CD14-positive monocyte (primary cell): ENCODE measurements at regions of chr9 and their contacts with region 1.

Region 1: DNA sequence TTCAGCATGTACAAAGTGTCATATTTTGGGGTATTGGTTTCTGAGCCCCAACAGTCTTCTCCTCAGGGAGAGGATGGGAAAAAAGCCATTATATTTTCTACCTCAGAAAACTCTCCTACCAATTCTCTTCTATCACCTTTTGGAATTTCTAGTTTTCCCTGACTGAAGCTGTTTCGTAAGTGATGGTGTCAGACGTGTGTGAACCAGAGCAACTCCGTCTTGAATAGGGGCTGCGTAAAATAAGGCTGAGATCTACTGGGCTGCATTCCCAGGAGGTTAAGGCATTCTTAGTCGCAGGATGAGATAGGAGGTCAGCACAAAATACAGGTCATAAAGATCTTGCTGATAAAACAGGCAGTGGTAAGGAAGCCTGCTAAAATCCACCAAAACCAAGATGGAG is 197.3 kb upstream of the C9orf72 start:
- DNase-seq: no peak
- H3K4me3 ChIP-seq: no peak overlapping the region
- H3K4me3 Mint-ChIP-seq: no peak overlapping the region
- H3K27ac ChIP-seq: no peak overlapping the region
- H3K27ac Mint-ChIP-seq: no peak overlapping the region
- H3K4me1 ChIP-seq: no peaks in the 10 kb centered on the region
- H3K4me1 Mint-ChIP-seq: no peaks in the 10 kb centered on the region
- H3K27me3 ChIP-seq: peaks cover 0 to 2% of the 10 kb centered on the region in 2 donors
- H3K27me3 Mint-ChIP-seq: peaks cover 2 to 5% (median 2%) of the 10 kb centered on the region in 3 donors
- CTCF ChIP-seq: no peak

Region 2: GRCh38 chr9:27785714-27786100 is 15.2 kb after region 1 on chr9:
- intact Hi-C with region 1: loop called in 1 of 2 experiments (anchors 1 kb)
- DNase-seq: peak in 2 of 3 donors; percentile 4 to 47
- H3K4me3 ChIP-seq: no peak overlapping the region
- H3K4me3 Mint-ChIP-seq: no peak overlapping the region
- H3K27ac ChIP-seq: no peak overlapping the region
- H3K27ac Mint-ChIP-seq: peak overlapping the region in 2 of 7 donors; percentile 40 to 43
- H3K4me1 ChIP-seq: no peaks in the 10 kb centered on the region
- H3K4me1 Mint-ChIP-seq: peaks cover 9% of the 10 kb centered on the region
- H3K27me3 ChIP-seq: no peaks in the 10 kb centered on the region
- H3K27me3 Mint-ChIP-seq: peaks cover 2 to 6% (median 4%) of the 10 kb centered on the region in 3 donors
- CTCF ChIP-seq: no peak